Thyroid gland (tissue), 4 donors: ENCODE measurements at regions of chr2 and their contacts with region 1.

Region 1: DNA sequence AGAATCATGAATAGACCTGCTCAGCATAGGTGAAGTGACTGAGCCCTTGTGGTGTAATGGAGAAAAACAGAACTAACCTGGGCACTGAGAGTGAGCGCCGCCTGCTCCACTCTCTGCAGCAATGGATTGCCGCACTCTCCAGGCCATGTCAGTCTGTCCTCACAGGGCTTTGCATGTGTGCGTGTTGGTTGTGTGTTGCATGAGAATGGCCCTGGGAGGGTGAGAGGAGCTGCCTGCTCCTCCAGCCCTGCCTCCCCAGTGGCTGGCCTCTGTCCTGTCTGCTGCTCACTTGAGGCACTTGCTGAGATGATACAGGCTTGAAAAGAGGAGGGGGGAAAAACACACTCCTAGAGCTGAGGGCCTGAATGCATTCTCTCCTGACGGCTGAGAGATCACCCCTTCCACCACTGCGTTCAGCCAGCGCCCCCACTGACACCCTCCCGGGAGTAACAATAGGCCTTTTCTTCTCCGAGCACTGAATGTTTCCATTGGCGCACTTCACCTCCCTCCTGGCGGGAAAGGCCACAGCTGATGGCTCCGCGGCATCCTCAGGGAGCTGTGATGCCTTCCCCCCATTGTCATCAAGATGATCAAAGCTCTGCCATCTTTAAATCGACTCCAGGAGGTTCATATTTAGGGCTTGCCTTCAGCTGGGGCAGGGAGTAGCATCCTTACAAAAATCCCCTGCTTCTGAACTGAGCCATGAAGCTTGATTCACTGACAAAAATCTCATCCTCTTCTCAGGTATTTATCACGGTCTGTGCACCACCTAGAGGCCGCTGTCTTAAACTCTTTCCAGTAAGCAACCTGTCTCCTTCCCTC is 49.9 kb upstream of the DAPL1 start:
- DNase-seq: peak; percentile 74 to 77
- H3K4me3 ChIP-seq: no peak overlapping the region
- H3K27ac ChIP-seq: no peak overlapping the region
- H3K4me1 ChIP-seq: peaks cover 7 to 32% of the 10 kb centered on the region in 2 donors
- H3K27me3 ChIP-seq: no peaks in the 10 kb centered on the region
- CTCF ChIP-seq: peak in 5 of 6 experiments; percentile 32 to 89 (median 67)
- POLR2A ChIP-seq: no peak

Region 2: GRCh38 chr2:158456309-158457066 is 288.8 kb before region 1 on chr2 and contains the starts of genes CCDC148 and PKP4:
- intact Hi-C with region 1: loop called (anchors 5 kb)
- DNase-seq: peak; percentile 93 to 94
- H3K4me3 ChIP-seq: peak within 1 kb of the TSS; percentile 89 to 93 (median 89)
- H3K27ac ChIP-seq: peak within 1 kb of the TSS; percentile 90 to 100 (median 97)
- H3K4me1 ChIP-seq: peaks cover 17 to 23% of the 10 kb centered on the region in 2 donors
- H3K27me3 ChIP-seq: no peaks in the 10 kb centered on the region
- CTCF ChIP-seq: peak in 4 of 6 experiments; percentile 5 to 55 (median 33)
- POLR2A ChIP-seq: peak; percentile 77 to 91
- total RNA-seq, gene CCDC148: 4.6 to 10.7 (median 7.4) TPM
- total RNA-seq, gene PKP4: 117 to 155 (median 136) TPM